ENCODE measurements at regions of chr11 and their contacts with region 1.

Region 1: GRCh38 chr11:82718307-82718706 is 15.4 kb downstream of the FAM181B start:
- DNase-seq: peak; percentile 48
- CTCF ChIP-seq: peak; percentile 58

Region 2: GRCh38 chr11:82867495-82868082 is 149.3 kb after region 1 on chr11:
- in situ Hi-C with region 1: loop called (anchors 25 kb)
- DNase-seq: peak; percentile 58
- CTCF ChIP-seq: peak; percentile 58

Region 3: GRCh38 chr11:83241291-83241946 is 523.1 kb after region 1 on chr11:
- in situ Hi-C with region 1: loop called (anchors 25 kb)
- DNase-seq: peak; percentile 34
- CTCF ChIP-seq: peak; percentile 59